K562 (cell line): ENCODE measurements at regions of chr16 and their contacts with region 1.

Region 1: DNA sequence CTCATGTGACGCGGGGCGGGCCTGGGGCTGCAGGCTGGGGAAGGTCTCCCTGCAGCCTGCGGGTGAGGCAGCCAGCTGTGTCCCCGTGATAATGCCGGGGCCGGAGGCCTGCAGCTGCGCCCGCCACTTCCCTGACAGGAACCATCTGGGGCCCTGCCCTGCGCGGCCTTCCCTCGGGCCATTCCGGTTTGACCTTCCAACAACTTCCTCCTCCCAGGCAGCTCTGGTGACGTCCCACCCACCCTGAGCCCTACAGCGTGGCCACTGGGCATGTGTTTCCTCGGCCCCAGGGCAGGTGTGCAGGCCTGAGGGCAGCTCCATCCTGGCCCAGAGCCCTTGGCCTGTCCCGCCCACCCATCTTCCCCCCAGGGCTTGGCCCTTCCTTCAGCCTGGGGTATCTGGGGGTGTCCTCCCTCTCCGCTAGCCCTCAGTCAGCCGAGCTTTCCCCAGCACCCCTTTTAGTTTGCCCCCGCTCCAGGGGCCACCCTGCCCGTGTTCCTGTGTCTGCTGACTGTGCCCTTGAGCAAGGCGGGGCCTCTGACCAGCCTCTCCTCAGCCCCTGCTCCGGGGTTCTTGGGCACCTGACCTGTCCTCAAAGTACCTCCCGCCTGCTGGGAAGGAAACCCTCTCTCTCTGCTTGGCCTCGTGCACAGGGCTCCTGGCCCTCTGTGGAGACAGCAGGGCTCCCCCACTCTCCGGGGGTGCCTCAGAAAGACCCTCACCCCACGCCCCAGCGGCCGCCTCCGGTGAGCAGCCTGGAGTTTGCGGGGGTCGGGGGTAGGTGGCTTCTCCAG is at the start of gene CBFA2T3:
- DNase-seq: peak; percentile 79 to 96 (median 88)
- ATAC-seq: peak; percentile 68
- H3K4me3 ChIP-seq: peak within 1 kb of the TSS; percentile 85
- H3K27ac ChIP-seq: peak within 1 kb of the TSS; percentile 98
- H3K4me1 ChIP-seq: peaks cover 49 to 90% of the 10 kb centered on the region in 2 experiments
- H3K27me3 ChIP-seq: no peaks in the 10 kb centered on the region
- CTCF ChIP-seq: no peak
- EP300 ChIP-seq: peak; percentile 80
- POLR2A ChIP-seq: peak; percentile 44
- RAD21 ChIP-seq: peak in 1 of 2 experiments; percentile 7; a peak in 2 of 4 replicates
- polyA plus RNA-seq, gene CBFA2T3: 2.3 to 2.7 TPM

Region 2: DNA sequence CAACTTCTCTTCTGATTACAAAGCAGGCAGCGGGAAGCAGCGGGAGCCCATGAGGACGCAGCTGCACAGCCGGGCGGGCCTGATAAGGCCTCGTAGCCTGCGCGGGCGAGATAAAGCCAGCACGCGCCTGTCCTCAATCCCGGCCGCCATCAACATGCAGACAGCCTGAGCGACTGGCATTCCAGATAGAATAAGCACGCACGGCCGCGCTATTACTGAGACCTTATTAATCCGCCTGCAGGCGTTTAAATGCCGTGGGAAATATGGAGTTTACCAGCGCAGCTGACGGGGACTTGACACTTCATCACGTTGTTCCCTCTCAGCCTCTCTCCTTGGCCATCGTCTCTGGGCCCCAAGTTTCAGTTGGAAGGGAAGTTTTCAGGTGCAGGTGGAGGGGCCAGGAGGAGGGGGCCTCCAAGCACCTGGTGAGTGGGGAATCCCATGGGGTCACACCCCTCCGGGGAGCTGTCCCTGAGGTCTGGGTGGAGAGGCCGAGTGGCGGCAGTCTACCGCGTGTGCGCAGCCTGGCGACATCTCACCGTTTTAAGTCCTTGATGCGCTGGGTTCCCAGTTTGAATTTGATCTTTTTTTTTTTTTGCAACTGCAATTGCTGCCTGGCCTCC is 27.1 kb after region 1 on chr16:
- CTCF ChIA-PET with region 1: no interaction called
- POLR2A ChIA-PET with region 1: interaction called, 10 read pairs
- in situ Hi-C with region 1: no loop called
- intact Hi-C with region 1: no loop called
- DNase-seq: peak; percentile 95 to 99 (median 96)
- ATAC-seq: peak; percentile 91
- H3K4me3 ChIP-seq: no peak overlapping the region
- H3K27ac ChIP-seq: peak overlapping the region; percentile 69
- H3K4me1 ChIP-seq: peaks cover 25 to 67% of the 10 kb centered on the region in 2 experiments
- H3K27me3 ChIP-seq: no peaks in the 10 kb centered on the region
- CTCF ChIP-seq: peak in 2 of 3 experiments; percentile 5 to 11; a peak in 1 of 6 replicates
- EP300 ChIP-seq: peak; percentile 99
- POLR2A ChIP-seq: no peak
- RAD21 ChIP-seq: peak; percentile 38 to 44

Region 3: DNA sequence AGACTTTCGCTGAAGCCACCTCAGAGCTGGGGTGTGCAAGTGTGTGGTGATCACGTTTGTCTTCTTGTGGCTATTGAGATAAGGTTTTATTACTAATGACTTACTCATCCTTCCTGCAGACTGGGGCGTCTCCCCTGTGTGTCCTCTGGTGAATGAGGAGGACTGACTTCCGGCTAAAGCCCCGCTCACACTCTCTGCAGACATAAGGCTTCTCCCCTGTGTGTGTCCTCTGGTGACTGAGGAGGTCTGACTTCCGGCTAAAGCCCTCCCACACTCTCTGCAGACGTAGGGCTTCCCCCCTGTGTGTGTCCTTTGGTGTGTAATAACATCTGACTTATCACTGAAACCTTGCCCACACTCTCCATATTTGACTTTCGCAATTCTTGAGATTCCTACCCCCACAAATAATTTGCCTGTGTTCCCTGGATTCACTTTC is 1080.5 kb after region 1 on chr16:
- CTCF ChIA-PET with region 1: no interaction called
- POLR2A ChIA-PET with region 1: no interaction called
- in situ Hi-C with region 1: no loop called
- intact Hi-C with region 1: no loop called
- DNase-seq: peak; percentile 46 to 71 (median 54)
- ATAC-seq: peak; percentile 88
- H3K4me3 ChIP-seq: no peak overlapping the region
- H3K27ac ChIP-seq: peak overlapping the region; percentile 70
- H3K4me1 ChIP-seq: peaks cover 6 to 15% of the 10 kb centered on the region in 2 experiments; a peak in 4 of 5 replicates
- H3K27me3 ChIP-seq: no peaks in the 10 kb centered on the region
- CTCF ChIP-seq: no peak
- EP300 ChIP-seq: peak; percentile 44; the same call in 1 of the 2 replicates
- POLR2A ChIP-seq: no peak
- RAD21 ChIP-seq: no peak